WTC11 (cell line): ENCODE measurements at regions of chr2 and their contacts with region 1.

Region 1: GRCh38 chr2:151238527-151239487 is 22.9 kb downstream of the RBM43 start:
- DNase-seq: peak; percentile 29
- ATAC-seq: peak; percentile 77
- H3K4me3 Mint-ChIP-seq: no peak overlapping the region
- H3K27ac Mint-ChIP-seq: no peak overlapping the region
- H3K4me1 Mint-ChIP-seq: peaks cover 8% of the 10 kb centered on the region
- H3K27me3 Mint-ChIP-seq: no peaks in the 10 kb centered on the region
- CTCF ChIP-seq: peak; percentile 69

Region 2: DNA sequence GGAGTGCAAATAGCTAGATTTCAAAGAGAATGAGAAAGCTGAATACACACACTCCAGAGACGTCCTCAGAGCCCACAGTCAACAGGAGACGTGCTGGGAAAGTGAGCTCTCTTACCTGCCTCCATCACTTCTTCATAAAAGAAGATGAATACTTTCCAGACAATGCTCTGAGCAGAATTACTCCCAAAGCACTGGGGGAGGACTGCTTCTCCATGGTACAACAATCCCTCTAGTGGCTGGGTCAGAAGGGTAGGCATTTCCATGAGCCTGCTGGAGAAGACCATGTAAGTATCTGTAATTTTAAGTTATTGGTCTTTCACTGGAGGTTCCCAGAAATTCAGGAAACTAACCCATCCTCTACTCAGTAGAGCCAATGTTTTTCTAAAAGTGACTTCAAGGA is 167.4 kb before region 1 on chr2:
- CTCF ChIA-PET with region 1: interaction called, 10 read pairs
- POLR2A ChIA-PET with region 1: no interaction called
- DNase-seq: peak; percentile 20
- ATAC-seq: peak; percentile 93
- H3K4me3 Mint-ChIP-seq: no peak overlapping the region
- H3K27ac Mint-ChIP-seq: peak overlapping the region; percentile 77; the same call in 1 of the 2 replicates
- H3K4me1 Mint-ChIP-seq: peaks cover 30% of the 10 kb centered on the region
- H3K27me3 Mint-ChIP-seq: no peaks in the 10 kb centered on the region
- CTCF ChIP-seq: no peak

Region 3: DNA sequence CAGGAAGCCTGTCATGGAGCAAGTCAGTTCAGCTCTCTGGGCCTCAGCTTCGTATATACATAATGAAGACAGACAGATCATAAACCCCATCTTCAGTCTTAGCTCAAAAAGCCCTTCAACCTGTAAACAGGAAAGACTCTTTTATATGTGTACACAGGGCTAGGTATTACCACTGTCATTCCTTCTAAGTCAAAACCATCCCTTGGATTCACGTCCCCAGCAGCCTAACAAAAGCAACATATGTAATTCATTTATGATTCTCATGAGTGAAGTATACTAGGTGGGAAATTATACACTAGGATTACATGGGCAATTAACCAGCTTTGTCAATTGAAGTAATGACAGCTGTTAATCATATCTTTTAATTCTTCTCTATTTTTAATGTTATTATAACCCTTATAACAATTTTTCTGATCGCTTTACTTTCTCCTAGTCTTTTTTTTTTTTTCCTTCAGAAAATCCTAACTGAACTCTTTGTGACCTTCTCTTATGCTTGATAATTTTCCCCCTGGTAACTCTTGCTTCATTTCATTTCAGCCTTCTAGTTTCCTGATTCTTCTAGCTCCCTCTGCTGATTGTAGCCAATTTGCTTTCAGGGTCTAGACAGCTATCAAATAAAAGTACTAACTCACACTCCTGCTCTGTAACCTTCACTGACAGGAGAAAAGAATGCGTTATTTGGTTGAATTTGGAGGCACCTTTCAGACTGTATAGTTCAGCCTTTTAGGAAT is 76.8 kb before region 1 on chr2:
- CTCF ChIA-PET with region 1: interaction called, 17 read pairs
- POLR2A ChIA-PET with region 1: no interaction called
- DNase-seq: no peak
- ATAC-seq: peak; percentile 56
- H3K4me3 Mint-ChIP-seq: no peak overlapping the region
- H3K27ac Mint-ChIP-seq: no peak overlapping the region
- H3K4me1 Mint-ChIP-seq: peaks cover 47% of the 10 kb centered on the region
- H3K27me3 Mint-ChIP-seq: peaks cover under 1% of the 10 kb centered on the region; the same call in 1 of the 2 replicates
- CTCF ChIP-seq: no peak

Region 4: GRCh38 chr2:151176661-151177060 is 62.1 kb before region 1 on chr2:
- CTCF ChIA-PET with region 1: interaction called, 23 read pairs
- POLR2A ChIA-PET with region 1: no interaction called
- DNase-seq: peak; percentile 17
- ATAC-seq: peak; percentile 63; the same call in 1 of the 2 replicates
- H3K4me3 Mint-ChIP-seq: no peak overlapping the region
- H3K27ac Mint-ChIP-seq: no peak overlapping the region
- H3K4me1 Mint-ChIP-seq: peaks cover 51% of the 10 kb centered on the region
- H3K27me3 Mint-ChIP-seq: no peaks in the 10 kb centered on the region; the same call in 1 of the 2 replicates
- CTCF ChIP-seq: no peak

Region 5: GRCh38 chr2:151182899-151183809 is 55.7 kb before region 1 on chr2:
- CTCF ChIA-PET with region 1: interaction called, 15 read pairs
- POLR2A ChIA-PET with region 1: no interaction called
- DNase-seq: no peak
- ATAC-seq: no peak
- H3K4me3 Mint-ChIP-seq: no peak overlapping the region
- H3K27ac Mint-ChIP-seq: no peak overlapping the region
- H3K4me1 Mint-ChIP-seq: peaks cover 15% of the 10 kb centered on the region
- H3K27me3 Mint-ChIP-seq: no peaks in the 10 kb centered on the region
- CTCF ChIP-seq: no peak

Region 6: DNA sequence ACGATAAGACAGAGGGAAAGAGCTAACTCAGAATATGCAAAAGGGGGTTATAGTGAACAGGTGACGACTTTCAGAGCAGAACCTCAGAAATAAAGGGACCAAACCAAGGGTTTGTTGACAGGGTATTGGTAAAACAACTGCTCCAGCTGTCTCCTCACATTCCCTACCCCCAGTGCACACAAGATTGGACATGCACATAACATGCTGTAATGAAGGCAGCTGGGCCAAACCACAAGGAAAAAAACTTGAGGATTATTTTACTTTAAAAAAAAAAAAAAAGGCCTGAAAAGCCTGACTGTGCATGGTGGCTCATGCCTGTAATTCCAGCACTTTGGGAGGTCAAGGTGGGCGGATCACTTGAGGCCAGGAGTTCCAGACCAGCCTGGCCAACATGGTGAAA is 19.3 kb after region 1 on chr2:
- CTCF ChIA-PET with region 1: no interaction called
- POLR2A ChIA-PET with region 1: no interaction called
- DNase-seq: no peak
- ATAC-seq: no peak
- H3K4me3 Mint-ChIP-seq: no peak overlapping the region
- H3K27ac Mint-ChIP-seq: no peak overlapping the region
- H3K4me1 Mint-ChIP-seq: peaks cover 26% of the 10 kb centered on the region
- H3K27me3 Mint-ChIP-seq: no peaks in the 10 kb centered on the region; the same call in 1 of the 2 replicates
- CTCF ChIP-seq: no peak